Activated naive CD4-positive, alpha-beta T cell treated with anti-CD3 and anti-CD28 coated beads, Interleukin-2, amount 10 ng/mL, durations not matched to agents 7 days and 5 days (primary cell): ENCODE measurements at regions of chr1 and their contacts with region 1.

Region 1: DNA sequence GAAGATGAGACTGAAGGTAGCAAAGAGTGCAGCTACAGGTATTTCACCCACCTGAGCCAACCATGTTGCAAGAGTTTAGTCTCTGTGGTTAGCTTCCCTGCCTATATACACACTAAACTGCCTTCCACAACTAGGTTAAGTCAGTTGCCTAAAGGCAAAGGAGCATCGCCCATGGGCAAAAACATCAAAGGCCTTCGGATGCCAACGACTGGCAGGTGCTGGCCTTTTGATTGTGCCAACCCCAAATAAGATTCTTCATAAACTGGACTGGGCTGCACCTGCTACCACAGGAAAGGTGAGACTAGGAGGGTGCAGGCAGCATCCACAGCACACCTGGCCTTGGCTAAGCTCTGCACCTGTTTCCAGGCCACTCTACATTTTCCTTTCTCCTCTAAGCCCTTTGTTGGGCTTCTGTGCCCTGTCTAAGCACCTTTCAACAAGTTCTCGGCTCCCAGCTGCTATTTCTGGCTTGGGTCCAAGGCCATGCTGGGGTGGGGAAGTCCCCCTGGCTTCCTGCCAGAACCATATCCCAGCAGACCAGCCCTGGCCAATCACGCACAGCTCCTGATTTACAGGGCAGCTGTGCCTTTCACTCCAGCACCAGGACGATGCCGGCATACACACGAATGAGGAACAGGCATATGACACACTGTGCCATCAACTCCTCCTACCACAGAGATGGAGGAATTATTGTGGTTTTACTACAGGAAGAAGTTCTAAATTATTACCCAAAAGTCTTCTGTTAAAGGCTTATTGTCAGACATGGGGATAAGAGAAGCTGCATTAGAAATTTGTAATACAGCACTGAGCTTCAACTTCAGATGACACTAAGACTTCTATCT is 37.8 kb downstream of the TRIT1 start:
- DNase-seq: peak; percentile 70
- H3K4me3 Mint-ChIP-seq: no peak overlapping the region
- H3K27ac Mint-ChIP-seq: peak overlapping the region; percentile 77
- H3K4me1 Mint-ChIP-seq: peaks cover 38% of the 10 kb centered on the region
- H3K27me3 Mint-ChIP-seq: no peaks in the 10 kb centered on the region

Region 2: GRCh38 chr1:39901698-39902459 is 56.4 kb after region 1 on chr1 and contains the start of gene MYCL:
- CTCF ChIA-PET with region 1: interaction called, 12 read pairs
- DNase-seq: peak; percentile 85
- H3K4me3 Mint-ChIP-seq: peak within 1 kb of the TSS; percentile 75
- H3K27ac Mint-ChIP-seq: no peak within 1 kb of the TSS
- H3K4me1 Mint-ChIP-seq: peaks cover 6% of the 10 kb centered on the region
- H3K27me3 Mint-ChIP-seq: peaks cover 92% of the 10 kb centered on the region